Transverse colon (tissue), 4 donors: ENCODE measurements at regions of chr14 and their contacts with region 1.

Region 1: GRCh38 chr14:60331201-60332045 is 82.4 kb downstream of the PPM1A start:
- DNase-seq: peak; percentile 74
- H3K4me3 ChIP-seq: peak overlapping the region in 3 of 4 donors; percentile 30 to 57 (median 39)
- H3K27ac ChIP-seq: peak overlapping the region; percentile 46 to 70 (median 60)
- H3K4me1 ChIP-seq: peaks cover 4 to 27% (median 13%) of the 10 kb centered on the region in 4 donors
- H3K27me3 ChIP-seq: peaks cover 17% of the 10 kb centered on the region
- CTCF ChIP-seq: peak; percentile 71 to 84 (median 81)
- EP300 ChIP-seq: no peak
- POLR2A ChIP-seq: peak; percentile 11

Region 2: GRCh38 chr14:60363275-60363674 is 31.9 kb after region 1 on chr14:
- in situ Hi-C with region 1: no loop called
- intact Hi-C with region 1: no loop called
- DNase-seq: no peak
- H3K4me3 ChIP-seq: no peak overlapping the region
- H3K27ac ChIP-seq: no peak overlapping the region
- H3K4me1 ChIP-seq: no peaks in the 10 kb centered on the region
- H3K27me3 ChIP-seq: no peaks in the 10 kb centered on the region
- CTCF ChIP-seq: no peak
- EP300 ChIP-seq: no peak
- POLR2A ChIP-seq: no peak

Region 3: DNA sequence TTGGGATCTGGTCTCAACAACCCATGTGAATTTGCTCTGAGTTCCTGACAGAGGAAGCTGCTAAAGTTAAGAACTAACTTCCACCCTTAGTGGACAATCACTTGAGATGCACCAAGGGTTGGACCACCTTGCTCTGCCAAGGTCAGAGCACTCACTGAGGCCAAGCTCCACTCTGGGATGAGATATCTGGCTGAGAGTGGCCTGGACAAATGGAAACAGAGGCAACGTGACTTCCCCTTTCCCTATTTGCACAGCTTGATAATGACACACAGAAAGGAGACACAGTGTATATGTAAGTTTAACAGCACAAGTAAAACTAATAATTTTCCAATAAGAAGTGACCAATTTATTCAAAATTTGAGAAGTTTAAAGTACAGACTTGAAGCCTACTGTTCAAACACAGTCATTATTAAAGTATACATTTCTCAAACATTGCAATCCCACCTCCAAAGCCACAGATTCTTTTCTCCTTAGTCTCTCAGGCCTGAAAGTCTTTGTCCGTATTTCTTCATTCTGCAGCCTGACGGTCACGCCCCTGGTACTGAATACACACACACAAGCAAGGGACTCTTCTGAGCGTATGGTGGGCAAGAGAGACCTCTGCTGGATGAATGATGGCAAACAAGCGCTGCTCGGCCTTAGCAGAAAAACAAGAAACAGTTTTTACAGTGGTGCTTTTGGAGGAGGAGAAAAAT is 921.1 kb after region 1 on chr14:
- in situ Hi-C with region 1: loop called in 2 of 4 experiments (anchors 25 kb)
- intact Hi-C with region 1: no loop called
- DNase-seq: peak; percentile 56
- H3K4me3 ChIP-seq: no peak overlapping the region
- H3K27ac ChIP-seq: no peak overlapping the region
- H3K4me1 ChIP-seq: no peaks in the 10 kb centered on the region
- H3K27me3 ChIP-seq: peaks cover 17% of the 10 kb centered on the region
- CTCF ChIP-seq: peak; percentile 58 to 69 (median 64)
- EP300 ChIP-seq: no peak
- POLR2A ChIP-seq: no peak